Common myeloid progenitor, CD34-positive (primary cell): ENCODE measurements at regions of chr3 and their contacts with region 1.

Region 1: GRCh38 chr3:194344012-194344411 is 7.1 kb downstream of the CPN2 start:
- DNase-seq: peak; percentile 59 to 79 (median 73)
- H3K4me3 ChIP-seq: no peak overlapping the region
- H3K27ac ChIP-seq: no peak overlapping the region
- H3K4me1 ChIP-seq: no peaks in the 10 kb centered on the region
- H3K27me3 ChIP-seq: peaks cover 0 to 7% (median 3%) of the 10 kb centered on the region in 5 experiments

Region 2: DNA sequence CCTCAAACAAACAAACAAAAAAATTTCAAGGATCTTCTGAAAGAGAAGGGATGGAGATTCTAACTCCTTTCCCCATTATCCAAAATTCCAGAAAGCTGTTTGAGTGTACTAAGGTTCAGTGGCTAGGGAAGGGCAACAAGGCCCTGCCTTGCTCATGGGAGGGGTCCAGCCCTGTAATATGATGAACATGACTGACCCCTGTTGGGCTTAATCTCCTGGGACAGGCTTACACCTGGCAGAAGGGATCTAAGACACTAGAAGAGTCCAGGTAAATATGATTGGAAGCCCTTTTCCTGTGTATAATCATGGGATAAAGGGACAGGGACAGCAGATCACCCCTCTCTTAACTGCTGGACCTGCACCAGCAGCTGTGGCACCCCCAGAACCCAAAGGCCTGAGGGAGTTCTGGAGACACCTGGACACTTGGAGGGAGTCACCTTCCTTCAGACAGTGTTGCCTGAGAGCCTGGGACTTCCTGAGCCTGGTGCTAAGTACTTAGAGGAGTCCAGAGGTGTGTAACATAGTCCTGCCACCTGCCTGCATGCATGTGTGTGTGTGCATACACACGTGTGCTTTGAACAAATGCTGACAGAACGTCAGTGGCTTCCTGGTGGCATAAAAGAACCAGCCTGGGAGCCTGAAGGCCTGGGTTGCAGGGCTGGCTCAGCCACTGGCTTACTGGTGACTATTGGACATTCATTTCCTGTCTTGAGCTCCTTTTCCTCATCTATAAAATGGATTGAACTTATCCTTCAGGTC is 10.1 kb after region 1 on chr3:
- CTCF ChIA-PET with region 1: interaction called, 56 read pairs
- POLR2A ChIA-PET with region 1: no interaction called
- DNase-seq: no peak
- H3K4me3 ChIP-seq: no peak overlapping the region
- H3K27ac ChIP-seq: no peak overlapping the region
- H3K4me1 ChIP-seq: peaks cover 0 to 5% (median 1%) of the 10 kb centered on the region in 4 experiments
- H3K27me3 ChIP-seq: peaks cover 0 to 9% (median 0%) of the 10 kb centered on the region in 5 experiments